ENCODE measurements at regions of chr1 and their contacts with region 1.

Region 1: DNA sequence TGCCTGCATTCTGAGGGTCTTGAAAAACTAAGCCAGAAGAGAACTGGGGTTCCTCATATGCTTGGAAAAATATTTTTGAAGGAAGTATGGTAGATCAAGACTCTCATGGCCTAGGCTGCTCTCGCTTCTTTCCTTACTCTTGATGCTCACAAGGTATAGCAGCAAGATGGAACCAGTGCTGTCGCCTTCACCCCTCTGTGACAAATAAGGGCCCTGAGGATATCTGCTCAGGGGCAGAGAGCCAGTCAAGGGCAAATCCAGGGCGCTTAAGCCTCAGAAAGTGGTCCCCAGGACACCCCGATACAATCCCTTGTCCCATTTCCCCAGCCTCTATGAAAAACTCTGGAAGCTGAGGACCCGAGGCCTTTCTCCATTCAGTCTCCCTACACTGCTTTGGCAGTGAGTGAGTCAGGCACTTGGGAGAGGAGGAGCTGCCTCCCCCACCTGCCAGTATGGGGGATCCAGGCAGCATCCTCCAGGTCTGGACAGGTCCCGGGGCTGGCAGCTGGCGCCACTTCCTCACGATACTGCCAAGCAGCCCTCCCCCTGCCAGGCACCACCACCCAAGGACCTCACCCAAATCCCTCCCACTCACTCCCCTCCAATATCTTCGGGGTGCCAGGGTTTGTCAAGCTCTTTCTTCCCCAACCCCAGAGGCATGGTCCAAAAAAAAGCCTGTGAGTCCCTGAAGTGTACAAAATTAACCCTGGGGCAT is 1.3 kb downstream of the IGSF9 start:
- DNase-seq: no peak
- H3K4me3 ChIP-seq: peak overlapping the region in 1 of 4 donors; percentile 53
- H3K27ac ChIP-seq: no peak overlapping the region
- H3K4me1 ChIP-seq: peaks cover 7 to 57% (median 35%) of the 10 kb centered on the region in 4 donors
- H3K27me3 ChIP-seq: peaks cover 14% of the 10 kb centered on the region
- CTCF ChIP-seq: no peak
- EP300 ChIP-seq: no peak
- POLR2A ChIP-seq: no peak

Region 2: DNA sequence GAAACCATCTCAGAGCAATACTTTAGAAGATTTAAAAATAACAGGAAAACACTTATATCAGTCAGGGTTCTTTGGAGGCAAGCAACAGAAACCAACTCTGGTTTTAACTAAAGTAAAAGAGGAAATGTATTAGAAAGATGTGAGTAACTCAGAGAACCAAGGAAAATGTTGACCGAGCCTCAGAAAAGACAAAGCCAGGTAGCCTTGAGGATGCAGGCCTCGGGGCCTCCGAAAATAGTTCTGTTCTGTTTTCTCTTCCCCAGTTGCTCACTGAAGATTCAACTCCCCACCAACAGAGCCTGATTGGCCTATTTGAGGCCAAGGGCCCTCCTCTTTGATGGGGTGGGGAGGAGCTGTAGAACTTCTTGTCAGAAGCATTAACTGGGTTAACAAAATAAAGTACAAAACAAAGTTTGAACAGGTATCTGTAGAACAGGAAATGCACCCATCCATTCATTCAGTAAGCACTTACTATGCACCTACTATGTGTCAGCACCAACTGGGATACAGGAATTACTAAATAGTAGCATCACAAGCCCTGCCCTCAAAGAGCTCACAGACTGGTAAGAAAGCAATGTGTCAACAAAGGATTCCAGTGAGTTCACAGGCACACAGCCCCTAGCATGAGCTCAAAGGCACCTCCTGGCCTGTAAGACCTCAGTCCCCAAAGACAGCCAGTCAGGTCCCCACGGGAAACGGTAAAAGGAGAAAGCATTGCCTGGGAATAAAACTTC is 104.8 kb before region 1 on chr1:
- in situ Hi-C with region 1: no loop called
- intact Hi-C with region 1: no loop called
- DNase-seq: no peak
- H3K4me3 ChIP-seq: no peak overlapping the region
- H3K27ac ChIP-seq: no peak overlapping the region
- H3K4me1 ChIP-seq: no peaks in the 10 kb centered on the region
- H3K27me3 ChIP-seq: no peaks in the 10 kb centered on the region
- CTCF ChIP-seq: no peak
- EP300 ChIP-seq: no peak
- POLR2A ChIP-seq: no peak

Region 3: DNA sequence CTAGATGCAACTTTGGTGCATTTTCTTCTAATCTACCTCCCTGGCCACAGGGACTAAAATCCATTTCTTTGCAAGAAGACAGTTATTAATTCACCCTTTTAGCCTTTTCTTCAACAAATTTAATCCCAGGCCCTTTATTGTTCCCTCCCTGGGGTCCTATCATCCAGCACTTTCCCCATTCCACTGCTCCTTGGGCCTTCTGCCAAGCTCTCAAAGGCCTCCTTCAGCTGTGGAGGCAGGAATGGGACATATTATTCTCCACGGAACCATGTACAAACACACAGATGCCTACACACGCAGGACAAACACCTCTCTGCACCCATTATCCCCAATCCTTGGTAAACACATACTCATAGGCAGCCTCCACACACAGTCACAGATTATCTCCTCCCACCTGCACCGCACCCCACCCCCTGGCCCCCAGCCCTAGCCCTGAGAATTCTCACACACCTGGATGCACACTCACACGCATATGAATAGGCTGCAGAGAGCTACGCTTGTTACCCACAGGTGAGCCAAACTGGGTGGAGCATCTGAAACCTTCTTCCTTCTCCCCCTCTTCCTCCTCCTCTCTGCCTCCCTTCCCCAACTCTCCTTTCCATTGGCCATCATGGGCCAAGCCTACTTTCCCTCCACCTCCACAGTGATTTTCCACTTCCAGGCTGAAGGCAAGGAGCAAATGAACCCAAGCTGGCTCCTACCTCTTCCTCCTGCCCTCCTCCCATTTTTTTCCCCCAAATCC is 30.4 kb before region 1 on chr1:
- in situ Hi-C with region 1: no loop called
- intact Hi-C with region 1: no loop called
- DNase-seq: no peak
- H3K4me3 ChIP-seq: no peak overlapping the region
- H3K27ac ChIP-seq: peak overlapping the region; percentile 25 to 75 (median 48)
- H3K4me1 ChIP-seq: peaks cover 14 to 70% (median 39%) of the 10 kb centered on the region in 4 donors
- H3K27me3 ChIP-seq: no peaks in the 10 kb centered on the region
- CTCF ChIP-seq: no peak
- EP300 ChIP-seq: no peak
- POLR2A ChIP-seq: no peak

Region 4: DNA sequence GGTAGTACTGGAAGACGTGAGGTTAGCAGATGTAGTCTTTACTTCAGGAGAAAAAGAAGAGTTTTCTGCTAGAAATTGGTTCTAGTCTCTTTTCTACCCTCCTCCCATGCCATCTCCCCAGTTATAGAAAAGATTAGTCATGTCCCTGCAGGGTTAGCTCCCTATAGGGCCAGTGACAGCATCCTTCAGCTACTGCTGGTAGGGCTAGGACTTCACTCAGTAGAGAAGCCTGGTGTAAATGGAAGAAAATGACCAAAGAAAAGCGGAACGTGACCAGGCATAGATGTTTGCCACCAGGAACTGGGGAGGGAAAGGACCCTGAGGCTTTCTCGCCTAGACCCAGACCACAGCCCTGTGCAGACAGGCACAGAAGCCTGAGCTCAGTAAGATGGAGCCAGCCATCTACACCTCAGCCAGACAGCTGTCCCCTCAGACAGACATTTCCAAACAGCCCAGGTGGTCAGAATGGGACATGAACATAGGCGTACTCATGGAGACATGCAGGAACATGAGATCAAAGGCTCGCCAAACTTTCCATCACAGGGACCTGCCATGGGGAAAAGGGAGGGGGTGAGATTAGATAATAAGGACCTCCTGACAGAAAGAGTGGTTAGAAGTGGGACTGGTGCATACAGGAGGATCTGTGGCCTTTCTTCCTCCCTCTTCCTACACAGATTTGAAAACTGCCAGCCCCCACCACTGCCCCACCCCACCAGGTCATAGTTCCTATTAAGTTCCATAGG is 33.5 kb after region 1 on chr1:
- in situ Hi-C with region 1: no loop called
- intact Hi-C with region 1: loop called (anchors 1 kb)
- DNase-seq: no peak
- H3K4me3 ChIP-seq: no peak overlapping the region
- H3K27ac ChIP-seq: no peak overlapping the region
- H3K4me1 ChIP-seq: peaks cover 0 to 4% (median 0%) of the 10 kb centered on the region in 4 donors
- H3K27me3 ChIP-seq: no peaks in the 10 kb centered on the region
- CTCF ChIP-seq: no peak
- EP300 ChIP-seq: no peak
- POLR2A ChIP-seq: no peak

Region 5: GRCh38 chr1:160144921-160145320 is 200.9 kb after region 1 on chr1:
- in situ Hi-C with region 1: no loop called
- intact Hi-C with region 1: no loop called
- DNase-seq: no peak
- H3K4me3 ChIP-seq: no peak overlapping the region
- H3K27ac ChIP-seq: no peak overlapping the region
- H3K4me1 ChIP-seq: peaks cover 0 to 4% (median 0%) of the 10 kb centered on the region in 4 donors
- H3K27me3 ChIP-seq: no peaks in the 10 kb centered on the region
- CTCF ChIP-seq: no peak
- EP300 ChIP-seq: no peak
- POLR2A ChIP-seq: no peak

Measured in transverse colon (tissue), 4 donors.